ENCODE measurements at regions of chr9 and their contacts with region 1.

Region 1: DNA sequence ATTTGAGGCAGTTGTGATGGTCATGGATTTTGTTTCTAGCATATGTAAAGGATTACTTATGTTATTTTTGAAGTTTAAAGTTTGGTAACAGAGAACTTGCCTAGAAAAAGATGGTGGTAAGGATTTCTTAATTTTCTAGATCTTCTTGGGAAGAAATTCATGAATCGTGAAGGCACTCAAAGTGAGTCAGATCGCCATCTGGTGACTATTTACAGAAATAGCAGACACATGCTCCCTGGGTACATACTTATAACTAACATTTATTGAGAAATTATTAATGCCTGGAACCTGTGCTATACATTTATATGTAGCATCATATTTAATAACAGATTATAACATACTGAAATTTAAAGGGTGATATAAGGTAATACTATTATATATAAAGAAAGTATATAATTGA is 299.7 kb downstream of the IZUMO3 start:
- DNase-seq: peak; percentile 57
- ATAC-seq: peak; percentile 50; the same call in 1 of the 2 replicates
- H3K4me3 ChIP-seq: no peak overlapping the region
- H3K27ac ChIP-seq: no peak overlapping the region
- H3K4me1 ChIP-seq: no peaks in the 10 kb centered on the region
- H3K27me3 ChIP-seq: no peaks in the 10 kb centered on the region
- CTCF ChIP-seq: peak; percentile 56

Region 2: GRCh38 chr9:23842565-23843129 is 403.3 kb before region 1 on chr9:
- CTCF ChIA-PET with region 1: no interaction called
- POLR2A ChIA-PET with region 1: no interaction called
- intact Hi-C with region 1: loop called (anchors 10 kb)
- DNase-seq: peak; percentile 39
- ATAC-seq: peak; percentile 48; the same call in 1 of the 2 replicates
- H3K4me3 ChIP-seq: no peak overlapping the region
- H3K27ac ChIP-seq: no peak overlapping the region
- H3K4me1 ChIP-seq: no peaks in the 10 kb centered on the region
- H3K27me3 ChIP-seq: no peaks in the 10 kb centered on the region
- CTCF ChIP-seq: peak; percentile 51

Region 3: DNA sequence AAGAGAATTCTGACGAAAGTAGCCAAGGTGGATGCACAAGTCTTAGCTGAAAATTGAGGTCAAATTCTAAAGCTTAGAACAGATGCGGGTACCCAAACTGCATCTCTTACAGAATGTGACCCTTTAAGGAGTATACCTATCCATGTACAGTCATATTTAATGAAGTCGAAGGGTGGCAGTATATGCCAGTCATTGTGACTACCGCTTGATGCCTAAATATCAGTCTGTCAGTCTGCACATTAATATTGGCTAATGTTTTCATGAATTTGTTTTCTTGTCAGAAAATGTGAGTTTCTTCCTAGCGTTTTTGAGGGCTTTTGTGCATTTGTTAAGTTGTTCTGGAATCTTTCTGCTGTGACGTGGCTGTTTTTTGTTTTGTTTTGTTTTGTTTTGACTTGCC is 155.4 kb before region 1 on chr9:
- CTCF ChIA-PET with region 1: no interaction called
- POLR2A ChIA-PET with region 1: no interaction called
- intact Hi-C with region 1: loop called (anchors 2 kb)
- DNase-seq: peak; percentile 41
- ATAC-seq: peak; percentile 76
- H3K4me3 ChIP-seq: no peak overlapping the region
- H3K27ac ChIP-seq: no peak overlapping the region
- H3K4me1 ChIP-seq: no peaks in the 10 kb centered on the region
- H3K27me3 ChIP-seq: no peaks in the 10 kb centered on the region
- CTCF ChIP-seq: peak; percentile 46; the same call in 1 of the 2 replicates

Region 4: DNA sequence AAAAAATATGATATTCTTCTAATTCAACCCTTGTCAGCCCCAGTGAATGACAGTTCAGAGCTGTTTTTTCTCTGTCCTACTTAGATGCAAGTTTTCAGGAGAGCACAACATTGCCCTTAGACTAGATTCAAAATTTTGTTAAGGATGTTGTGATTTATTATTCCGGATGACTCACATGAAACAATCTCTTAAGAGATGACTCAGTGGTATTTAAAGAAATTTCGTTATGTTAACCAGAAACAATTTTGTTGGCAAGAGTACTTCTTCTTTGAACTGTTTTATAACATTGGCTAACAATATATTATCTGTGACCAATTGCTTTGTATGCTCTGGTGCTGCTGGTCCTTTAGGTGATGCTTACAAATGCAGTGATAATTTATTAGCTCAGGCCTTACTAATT is 167.7 kb after region 1 on chr9:
- CTCF ChIA-PET with region 1: no interaction called
- POLR2A ChIA-PET with region 1: no interaction called
- intact Hi-C with region 1: loop called (anchors 10 kb)
- DNase-seq: peak; percentile 56
- ATAC-seq: peak; percentile 74
- H3K4me3 ChIP-seq: no peak overlapping the region
- H3K27ac ChIP-seq: 0 out of 2 replicates have a peak overlapping the region, but pooled peaks have one; percentile 2
- H3K4me1 ChIP-seq: peaks cover 3% of the 10 kb centered on the region; the same call in 1 of the 2 replicates
- H3K27me3 ChIP-seq: no peaks in the 10 kb centered on the region
- CTCF ChIP-seq: no peak

Region 5: GRCh38 chr9:24590432-24590831 is 344.4 kb after region 1 on chr9:
- CTCF ChIA-PET with region 1: no interaction called
- POLR2A ChIA-PET with region 1: no interaction called
- intact Hi-C with region 1: loop called (anchors 10 kb)
- DNase-seq: peak; percentile 37
- ATAC-seq: peak; percentile 84
- H3K4me3 ChIP-seq: no peak overlapping the region
- H3K27ac ChIP-seq: no peak overlapping the region
- H3K4me1 ChIP-seq: 0 out of 2 replicates have a peak, but pooled peaks cover 8% of the 10 kb centered on the region
- H3K27me3 ChIP-seq: no peaks in the 10 kb centered on the region
- CTCF ChIP-seq: no peak